Naive thymus-derived CD4-positive, alpha-beta T cell (primary cell): ENCODE measurements at regions of chr18 and their contacts with region 1.

Region 1: DNA sequence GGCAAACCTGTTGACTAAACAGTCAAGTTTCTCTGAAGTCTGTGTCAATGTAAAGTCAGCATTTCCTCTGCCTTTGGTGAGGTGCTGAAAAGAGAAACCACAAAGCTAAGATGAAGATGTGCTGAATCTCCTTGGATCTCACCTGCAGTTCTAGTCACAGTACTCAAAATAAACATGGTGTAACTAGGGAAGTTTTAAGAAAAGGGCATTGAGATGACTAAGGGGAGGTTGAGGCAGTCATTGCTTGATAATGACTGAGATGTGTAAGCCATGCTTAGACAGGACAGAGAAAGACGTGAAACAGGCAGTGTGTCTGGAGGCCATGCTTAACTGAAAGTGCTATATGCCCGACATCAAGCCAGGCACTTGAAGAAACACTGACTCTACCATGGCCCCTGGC is 1010.0 kb upstream of the CELF4 start:
- DNase-seq: peak in 7 of 9 donors; percentile 22 to 65 (median 52)
- ATAC-seq: peak; percentile 49
- H3K4me3 ChIP-seq: peak overlapping the region; percentile 5
- H3K4me3 Mint-ChIP-seq: peak overlapping the region; percentile 34 to 89 (median 77)
- H3K27ac ChIP-seq: no peak overlapping the region
- H3K27ac Mint-ChIP-seq: peak overlapping the region; percentile 10 to 89 (median 69)
- H3K4me1 ChIP-seq: peaks cover 0 to 33% of the 10 kb centered on the region in 2 donors
- H3K4me1 Mint-ChIP-seq: peaks cover 16 to 53% (median 45%) of the 10 kb centered on the region in 7 donors
- H3K27me3 ChIP-seq: no peaks in the 10 kb centered on the region
- H3K27me3 Mint-ChIP-seq: no peaks in the 10 kb centered on the region

Region 2: DNA sequence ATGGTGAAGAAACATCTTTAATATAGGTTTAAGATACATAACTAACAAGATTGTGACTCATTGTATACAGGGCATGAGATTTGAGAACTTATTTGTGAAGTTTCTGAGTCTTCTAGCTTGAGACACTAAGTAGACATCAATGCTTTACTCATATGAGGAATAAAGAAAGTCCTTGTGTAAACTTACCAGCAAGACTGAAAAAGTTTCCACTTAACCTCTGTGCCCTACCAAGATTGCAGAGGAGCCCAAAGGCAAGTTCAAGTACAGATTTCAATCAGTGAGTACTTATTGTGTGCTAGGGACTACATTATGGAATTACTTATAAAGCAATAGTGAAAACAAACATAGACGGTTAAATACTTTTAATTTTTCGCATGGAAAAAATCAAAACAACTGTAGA is 31.2 kb after region 1 on chr18:
- CTCF ChIA-PET with region 1: no interaction called
- POLR2A ChIA-PET with region 1: no interaction called
- intact Hi-C with region 1: loop called in 1 of 2 experiments (anchors 2 kb)
- DNase-seq: no peak
- ATAC-seq: no peak
- H3K4me3 ChIP-seq: no peak overlapping the region
- H3K4me3 Mint-ChIP-seq: no peak overlapping the region
- H3K27ac ChIP-seq: no peak overlapping the region
- H3K27ac Mint-ChIP-seq: no peak overlapping the region
- H3K4me1 ChIP-seq: no peaks in the 10 kb centered on the region
- H3K4me1 Mint-ChIP-seq: peaks cover 0 to 12% (median 4%) of the 10 kb centered on the region in 7 donors
- H3K27me3 ChIP-seq: no peaks in the 10 kb centered on the region
- H3K27me3 Mint-ChIP-seq: no peaks in the 10 kb centered on the region

Region 3: GRCh38 chr18:38807915-38808314 is 232.3 kb after region 1 on chr18:
- CTCF ChIA-PET with region 1: no interaction called
- POLR2A ChIA-PET with region 1: no interaction called
- intact Hi-C with region 1: no loop called
- DNase-seq: no peak
- ATAC-seq: no peak
- H3K4me3 ChIP-seq: no peak overlapping the region
- H3K4me3 Mint-ChIP-seq: no peak overlapping the region
- H3K27ac ChIP-seq: no peak overlapping the region
- H3K27ac Mint-ChIP-seq: no peak overlapping the region
- H3K4me1 ChIP-seq: no peaks in the 10 kb centered on the region
- H3K4me1 Mint-ChIP-seq: no peaks in the 10 kb centered on the region
- H3K27me3 ChIP-seq: no peaks in the 10 kb centered on the region
- H3K27me3 Mint-ChIP-seq: no peaks in the 10 kb centered on the region

Region 4: DNA sequence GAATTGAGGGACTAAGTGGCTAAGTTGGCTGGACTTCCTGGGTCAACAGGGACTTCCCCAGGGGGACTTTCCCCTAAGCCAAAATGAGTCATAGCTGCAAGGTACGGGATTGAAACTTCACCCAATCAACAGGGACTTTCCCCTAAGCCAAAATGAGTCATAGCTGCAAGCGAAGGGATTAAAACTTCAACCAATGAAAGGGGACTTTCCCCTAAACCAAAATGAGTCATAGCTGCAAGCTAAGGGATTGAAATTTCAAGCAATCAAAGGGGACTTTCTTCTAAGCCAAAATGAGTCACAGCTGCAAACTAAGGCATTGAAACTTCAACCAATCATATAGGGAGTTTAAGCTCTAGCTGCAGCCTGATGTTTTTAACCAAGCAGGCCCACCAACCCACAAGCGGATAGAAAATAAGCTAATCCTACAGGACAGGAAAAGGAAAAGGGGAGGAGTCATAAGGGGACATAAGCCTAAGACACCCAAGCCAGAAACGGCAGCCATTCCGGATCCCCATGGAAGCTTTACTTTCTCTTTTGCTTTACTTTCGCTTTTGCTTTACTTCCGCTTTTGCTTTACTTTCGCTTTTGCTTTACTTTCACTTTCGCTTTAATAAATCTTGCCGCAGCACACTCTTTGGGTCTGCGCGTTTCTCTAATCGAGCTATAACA is 365.3 kb after region 1 on chr18:
- CTCF ChIA-PET with region 1: no interaction called
- POLR2A ChIA-PET with region 1: no interaction called
- intact Hi-C with region 1: loop called (anchors 1 kb)
- DNase-seq: peak in 7 of 9 donors; percentile 10 to 68 (median 30)
- ATAC-seq: peak; percentile 81
- H3K4me3 ChIP-seq: peak overlapping the region; percentile 42
- H3K4me3 Mint-ChIP-seq: peak overlapping the region; percentile 38 to 85 (median 74)
- H3K27ac ChIP-seq: no peak overlapping the region
- H3K27ac Mint-ChIP-seq: peak overlapping the region; percentile 43 to 94 (median 90)
- H3K4me1 ChIP-seq: peaks cover 7 to 9% of the 10 kb centered on the region in 2 donors
- H3K4me1 Mint-ChIP-seq: peaks cover 23 to 42% (median 27%) of the 10 kb centered on the region in 7 donors
- H3K27me3 ChIP-seq: no peaks in the 10 kb centered on the region
- H3K27me3 Mint-ChIP-seq: peaks cover 0 to 13% (median 0%) of the 10 kb centered on the region in 5 donors

Region 5: GRCh38 chr18:39149211-39149806 is 573.7 kb after region 1 on chr18:
- CTCF ChIA-PET with region 1: no interaction called
- POLR2A ChIA-PET with region 1: no interaction called
- intact Hi-C with region 1: no loop called
- DNase-seq: no peak
- ATAC-seq: no peak
- H3K4me3 ChIP-seq: no peak overlapping the region
- H3K4me3 Mint-ChIP-seq: no peak overlapping the region
- H3K27ac ChIP-seq: no peak overlapping the region
- H3K27ac Mint-ChIP-seq: no peak overlapping the region
- H3K4me1 ChIP-seq: no peaks in the 10 kb centered on the region
- H3K4me1 Mint-ChIP-seq: no peaks in the 10 kb centered on the region
- H3K27me3 ChIP-seq: no peaks in the 10 kb centered on the region
- H3K27me3 Mint-ChIP-seq: no peaks in the 10 kb centered on the region